Activated naive CD4-positive, alpha-beta T cell treated with anti-CD3 and anti-CD28 coated beads for 36 hours (primary cell): ENCODE measurements at regions of chr18 and their contacts with region 1.

Region 1: DNA sequence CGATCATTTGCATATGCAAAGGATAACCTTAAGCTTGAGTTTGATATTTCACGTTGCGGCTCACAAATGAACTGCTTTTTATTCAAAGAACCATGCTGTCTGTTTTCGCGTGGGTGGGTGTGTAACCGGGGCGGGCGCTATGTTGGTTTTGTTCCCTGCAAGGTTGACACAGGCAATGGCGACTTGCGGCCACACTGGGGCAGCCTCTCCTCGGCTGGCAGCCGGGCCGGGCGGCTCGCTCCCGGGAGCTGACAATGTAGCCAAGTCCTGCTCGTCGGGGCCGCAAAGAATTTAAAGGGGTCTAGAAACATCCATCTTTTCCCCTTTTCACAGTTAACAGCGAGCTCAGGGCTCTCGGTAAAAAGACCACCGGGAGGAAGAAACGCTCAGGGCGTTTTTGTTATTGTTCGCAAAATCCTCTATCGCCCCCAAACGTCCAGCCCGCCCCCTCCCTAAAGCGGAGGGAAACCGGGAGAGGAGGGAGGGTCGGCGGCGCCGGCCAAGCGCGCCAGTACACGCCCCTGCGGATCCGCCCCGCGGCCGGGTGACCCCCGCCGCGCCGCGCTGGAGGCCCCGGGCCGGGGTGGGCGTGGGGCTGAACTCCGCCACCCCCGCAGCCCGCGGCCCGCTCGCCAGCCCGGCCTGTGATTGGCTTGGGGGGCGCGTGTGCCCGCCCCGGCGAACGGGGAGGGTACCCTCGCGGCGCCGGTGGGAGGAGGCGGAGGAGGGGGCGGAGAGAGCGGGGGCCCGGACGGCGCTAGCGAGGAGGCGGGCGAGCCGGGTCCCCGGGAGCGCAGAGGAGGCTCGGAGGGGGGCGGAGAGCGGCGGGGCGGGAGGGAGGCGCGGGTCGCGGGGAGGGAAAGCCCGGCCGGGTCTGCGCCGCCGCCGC is at the start of gene NEDD4L:
- DNase-seq: peak; percentile 89
- H3K4me3 Mint-ChIP-seq: peak within 1 kb of the TSS; percentile 85
- H3K27ac Mint-ChIP-seq: no peak within 1 kb of the TSS
- H3K4me1 Mint-ChIP-seq: peaks cover 25% of the 10 kb centered on the region
- H3K27me3 Mint-ChIP-seq: peaks cover 10% of the 10 kb centered on the region
- total RNA-seq, gene NEDD4L: 5.3 to 5.6 TPM

Region 2: GRCh38 chr18:57586251-57587049 is 457.3 kb before region 1 on chr18 and contains the start of gene FECH:
- CTCF ChIA-PET with region 1: no interaction called
- intact Hi-C with region 1: loop called (anchors 10 kb)
- DNase-seq: peak; percentile 58
- H3K4me3 Mint-ChIP-seq: peak within 1 kb of the TSS; percentile 83
- H3K27ac Mint-ChIP-seq: peak within 1 kb of the TSS; percentile 56
- H3K4me1 Mint-ChIP-seq: peaks cover 20% of the 10 kb centered on the region
- H3K27me3 Mint-ChIP-seq: no peaks in the 10 kb centered on the region
- total RNA-seq, gene FECH: 18.8 to 19.2 TPM

Region 3: DNA sequence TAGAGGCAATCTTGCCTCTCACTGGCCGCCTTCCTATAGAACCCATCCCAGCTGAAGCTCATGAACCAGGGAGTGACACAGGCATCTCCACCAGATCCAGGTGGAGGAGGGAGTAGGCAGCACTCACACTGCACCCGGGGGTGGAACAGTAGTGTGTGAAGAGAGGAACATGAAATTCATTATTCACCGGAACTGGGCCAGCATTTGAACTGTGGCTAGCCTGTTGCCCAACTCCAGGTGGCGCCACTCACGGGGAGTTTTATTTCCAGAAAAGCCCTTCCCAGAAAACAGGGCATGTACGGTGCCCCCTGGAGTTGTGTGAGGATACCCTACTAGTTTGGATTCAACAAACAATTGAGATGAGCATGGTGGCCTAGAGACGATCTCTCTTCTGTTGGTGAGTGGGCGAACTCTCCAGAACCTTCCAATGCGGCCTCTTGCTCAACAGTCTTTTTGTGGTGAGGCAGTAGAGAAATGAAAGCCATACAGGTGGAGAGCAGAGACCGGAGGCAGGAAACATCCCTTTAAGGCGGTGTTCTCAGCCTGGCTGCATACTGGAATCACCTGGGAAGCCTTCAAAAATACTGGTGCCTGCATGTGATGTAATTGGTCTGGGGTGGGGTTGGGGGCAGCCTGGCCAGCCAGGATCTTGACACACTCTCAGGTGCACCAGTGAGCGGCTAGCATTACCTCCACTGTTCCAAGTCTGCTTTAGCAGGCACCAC is 73.2 kb before region 1 on chr18:
- CTCF ChIA-PET with region 1: no interaction called
- intact Hi-C with region 1: loop called (anchors 5 kb)
- DNase-seq: peak; percentile 19
- H3K4me3 Mint-ChIP-seq: no peak overlapping the region
- H3K27ac Mint-ChIP-seq: no peak overlapping the region
- H3K4me1 Mint-ChIP-seq: no peaks in the 10 kb centered on the region
- H3K27me3 Mint-ChIP-seq: peaks cover 5% of the 10 kb centered on the region

Region 4: GRCh38 chr18:58125183-58125582 is 81.4 kb after region 1 on chr18:
- CTCF ChIA-PET with region 1: interaction called, 21 read pairs
- intact Hi-C with region 1: loop called (anchors 1 kb)
- DNase-seq: no peak
- H3K4me3 Mint-ChIP-seq: no peak overlapping the region
- H3K27ac Mint-ChIP-seq: no peak overlapping the region
- H3K4me1 Mint-ChIP-seq: no peaks in the 10 kb centered on the region
- H3K27me3 Mint-ChIP-seq: no peaks in the 10 kb centered on the region

Region 5: DNA sequence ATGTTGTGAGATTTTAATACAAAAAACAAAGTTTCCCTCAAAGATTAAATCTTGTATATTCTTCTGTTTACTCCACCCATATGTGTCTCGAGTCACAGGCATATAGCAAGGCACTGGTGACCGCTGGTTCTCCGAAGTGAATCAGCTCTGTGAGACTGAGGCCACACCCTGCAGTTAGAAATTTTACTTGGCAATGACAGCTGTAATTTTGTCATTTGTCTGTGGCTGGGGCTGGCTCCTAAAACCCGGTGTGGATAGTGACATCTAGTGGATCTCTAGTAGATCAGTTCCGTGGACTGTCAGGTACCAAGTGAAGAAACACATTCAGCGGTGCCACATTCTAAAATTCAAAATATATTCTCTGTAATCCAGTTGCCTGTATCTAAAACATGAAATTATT is 278.3 kb after region 1 on chr18:
- CTCF ChIA-PET with region 1: interaction called, 4 read pairs
- intact Hi-C with region 1: loop called (anchors 1 kb)
- DNase-seq: peak; percentile 80
- H3K4me3 Mint-ChIP-seq: no peak overlapping the region
- H3K27ac Mint-ChIP-seq: no peak overlapping the region
- H3K4me1 Mint-ChIP-seq: peaks cover 16% of the 10 kb centered on the region
- H3K27me3 Mint-ChIP-seq: no peaks in the 10 kb centered on the region

Region 6: DNA sequence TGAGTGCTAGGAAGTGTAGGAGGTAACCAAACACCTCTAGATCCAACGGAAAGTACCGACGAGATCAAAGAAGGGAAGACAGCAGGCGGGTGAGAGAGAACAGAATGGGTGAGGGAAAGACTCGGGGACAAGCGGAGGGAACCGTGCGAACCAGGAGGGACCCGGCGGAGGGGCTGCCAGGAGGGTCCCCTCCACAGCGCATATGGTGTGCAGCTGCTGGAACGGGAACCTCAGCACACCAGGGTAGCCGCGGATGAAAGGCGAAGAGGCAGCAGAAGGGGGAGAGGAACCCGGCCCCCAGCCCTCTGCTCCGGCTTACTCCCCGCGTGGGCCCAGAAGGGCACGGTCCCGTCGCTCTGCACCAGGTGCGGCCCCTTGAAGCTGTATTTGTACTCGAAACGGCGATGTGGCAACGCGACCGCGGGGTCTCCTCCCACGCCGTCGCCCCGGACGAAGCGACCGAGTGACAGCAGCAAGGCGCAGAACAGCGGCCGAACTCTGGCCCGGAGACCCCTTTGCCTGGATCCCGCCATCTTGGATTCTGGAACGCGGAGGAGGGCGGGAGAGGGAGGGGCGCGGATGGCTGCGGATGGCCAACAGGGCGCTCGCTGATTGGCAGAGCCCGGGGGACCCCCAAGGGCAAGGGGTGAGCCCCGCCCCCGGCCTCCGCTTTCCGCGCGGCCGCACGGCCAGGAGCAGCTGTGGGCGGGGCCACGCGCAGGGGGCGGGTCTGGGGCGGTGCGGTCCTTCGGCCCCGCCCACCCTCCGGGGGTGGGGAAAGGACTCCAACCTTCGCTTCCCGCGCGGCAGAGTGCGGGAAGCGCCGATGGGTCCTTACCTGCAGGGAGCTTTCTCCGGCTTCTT is 1315.2 kb after region 1 on chr18 and contains the start of gene LMAN1:
- CTCF ChIA-PET with region 1: no interaction called
- intact Hi-C with region 1: loop called (anchors 5 kb)
- DNase-seq: peak; percentile 96
- H3K4me3 Mint-ChIP-seq: peak within 1 kb of the TSS; percentile 98
- H3K27ac Mint-ChIP-seq: peak within 1 kb of the TSS; percentile 98
- H3K4me1 Mint-ChIP-seq: peaks cover 36% of the 10 kb centered on the region
- H3K27me3 Mint-ChIP-seq: no peaks in the 10 kb centered on the region
- total RNA-seq, gene LMAN1: 146 to 151 TPM